CD4-positive, alpha-beta memory T cell (primary cell): ENCODE measurements at regions of chr20 and their contacts with region 1.

Region 1: DNA sequence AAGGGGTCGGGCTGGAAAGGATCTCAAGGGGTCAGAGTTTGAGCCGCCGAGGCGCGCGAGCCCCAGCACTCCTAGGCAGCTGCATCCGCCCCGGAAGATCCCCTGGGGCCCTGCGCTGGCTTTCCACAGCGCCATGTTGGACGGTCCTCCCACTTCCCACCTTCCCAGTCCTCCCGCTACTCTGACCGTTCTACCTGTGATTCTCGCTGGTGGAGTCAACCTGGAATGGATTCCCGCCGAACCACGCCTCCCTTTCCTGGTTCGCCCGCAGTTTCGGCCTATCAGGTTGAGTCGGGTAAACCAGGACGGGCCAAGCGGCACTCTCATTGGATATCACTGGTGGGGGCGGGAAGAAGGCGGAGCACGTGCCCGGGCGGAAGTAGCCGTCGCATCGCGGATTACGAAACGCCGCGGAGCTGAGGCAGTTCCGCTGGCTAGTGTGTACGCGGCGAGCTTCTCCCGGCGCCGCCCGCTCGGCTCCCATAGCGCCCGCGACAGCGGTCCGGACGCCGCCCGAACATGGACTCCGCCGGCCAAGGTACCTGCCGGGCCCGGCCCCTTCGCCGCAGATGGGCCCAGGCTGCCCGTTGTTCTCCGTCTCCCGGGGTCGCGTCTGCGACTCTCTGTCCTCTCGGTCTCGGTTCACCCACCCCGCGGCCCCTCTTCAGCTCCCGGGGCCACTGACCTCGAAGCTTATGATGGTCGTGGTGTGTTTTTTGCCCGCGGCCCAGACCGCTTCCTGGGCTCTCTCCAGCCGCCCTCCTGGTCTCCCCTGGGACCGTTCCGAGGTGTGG is at the start of gene TPD52L2:
- DNase-seq: peak; percentile 96 to 99 (median 97)
- H3K4me3 ChIP-seq: peak within 1 kb of the TSS; percentile 81 to 90
- H3K4me3 Mint-ChIP-seq: peak within 1 kb of the TSS; percentile 90 to 99 (median 96)
- H3K27ac ChIP-seq: peak within 1 kb of the TSS; percentile 81
- H3K27ac Mint-ChIP-seq: peak within 1 kb of the TSS; percentile 87 to 99 (median 96)
- H3K4me1 ChIP-seq: peaks cover 29% of the 10 kb centered on the region
- H3K4me1 Mint-ChIP-seq: peaks cover 15 to 48% (median 29%) of the 10 kb centered on the region in 4 donors
- H3K27me3 ChIP-seq: no peaks in the 10 kb centered on the region
- H3K27me3 Mint-ChIP-seq: no peaks in the 10 kb centered on the region
- total RNA-seq, gene TPD52L2: 44.4 to 44.9 TPM

Region 2: DNA sequence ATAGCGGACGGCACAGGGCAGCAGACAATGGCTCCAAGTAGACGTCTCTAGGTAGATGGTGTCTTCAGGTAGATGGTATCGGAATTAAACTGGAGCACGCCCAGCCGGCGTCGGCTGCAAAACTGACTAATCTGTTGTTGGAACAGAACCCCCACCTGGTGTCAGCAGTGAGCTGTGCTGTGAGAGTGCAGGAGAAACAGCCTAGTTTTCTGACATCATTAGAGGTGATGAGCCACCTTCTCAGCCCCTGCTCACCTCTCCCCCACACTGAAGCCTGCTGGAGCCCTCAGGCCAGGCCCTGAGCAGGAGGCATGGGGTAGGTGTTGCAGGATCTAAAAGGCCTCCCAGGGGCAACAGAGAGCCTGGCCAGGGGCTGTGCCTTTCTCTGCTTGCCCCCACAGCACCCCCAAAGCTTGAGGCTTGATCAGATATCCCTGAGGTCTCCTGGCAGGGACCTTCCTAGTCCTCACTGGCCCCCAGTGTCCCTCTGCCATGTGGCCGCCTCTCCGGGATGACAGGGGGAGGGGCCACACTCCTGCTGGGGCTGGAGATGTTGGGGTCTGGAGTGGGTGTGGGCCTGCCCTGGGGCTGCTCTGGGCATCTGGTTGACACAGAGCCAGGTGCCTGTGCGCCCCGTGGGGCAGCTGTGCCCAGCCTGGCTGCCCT is 284.1 kb before region 1 on chr20:
- CTCF ChIA-PET with region 1: interaction called, 4 read pairs
- POLR2A ChIA-PET with region 1: interaction called, 3 read pairs
- intact Hi-C with region 1: loop called (anchors 5 kb)
- DNase-seq: peak; percentile 68 to 82 (median 78)
- H3K4me3 ChIP-seq: no peak overlapping the region
- H3K4me3 Mint-ChIP-seq: peak overlapping the region in 1 of 8 donors; percentile 43
- H3K27ac ChIP-seq: no peak overlapping the region
- H3K27ac Mint-ChIP-seq: peak overlapping the region in 2 of 7 donors; percentile 7 to 16
- H3K4me1 ChIP-seq: peaks cover 3% of the 10 kb centered on the region
- H3K4me1 Mint-ChIP-seq: peaks cover 1 to 13% (median 6%) of the 10 kb centered on the region in 4 donors
- H3K27me3 ChIP-seq: no peaks in the 10 kb centered on the region
- H3K27me3 Mint-ChIP-seq: no peaks in the 10 kb centered on the region

Region 3: GRCh38 chr20:63707549-63708300 is 157.3 kb before region 1 on chr20 and contains the starts of genes ARFRP1 and ZGPAT:
- CTCF ChIA-PET with region 1: interaction called, 14 read pairs
- POLR2A ChIA-PET with region 1: interaction called, 26 read pairs
- intact Hi-C with region 1: loop called (anchors 1 kb)
- DNase-seq: peak; percentile 85 to 91 (median 86)
- H3K4me3 ChIP-seq: peak within 1 kb of the TSS; percentile 57 to 87
- H3K4me3 Mint-ChIP-seq: peak within 1 kb of the TSS; percentile 86 to 95 (median 90)
- H3K27ac ChIP-seq: peak within 1 kb of the TSS; percentile 65
- H3K27ac Mint-ChIP-seq: peak within 1 kb of the TSS; percentile 86 to 95 (median 90)
- H3K4me1 ChIP-seq: peaks cover 52% of the 10 kb centered on the region
- H3K4me1 Mint-ChIP-seq: peaks cover 24 to 61% (median 38%) of the 10 kb centered on the region in 4 donors
- H3K27me3 ChIP-seq: no peaks in the 10 kb centered on the region
- H3K27me3 Mint-ChIP-seq: no peaks in the 10 kb centered on the region
- total RNA-seq, gene ARFRP1: 85.6 to 92.0 TPM
- total RNA-seq, gene ZGPAT: 51.8 to 55.3 TPM

Region 4: GRCh38 chr20:63854069-63854765 is 10.8 kb before region 1 on chr20:
- CTCF ChIA-PET with region 1: no interaction called
- POLR2A ChIA-PET with region 1: interaction called, 16 read pairs
- intact Hi-C with region 1: no loop called
- DNase-seq: no peak
- H3K4me3 ChIP-seq: no peak overlapping the region
- H3K4me3 Mint-ChIP-seq: no peak overlapping the region
- H3K27ac ChIP-seq: no peak overlapping the region
- H3K27ac Mint-ChIP-seq: no peak overlapping the region
- H3K4me1 ChIP-seq: peaks cover 27% of the 10 kb centered on the region
- H3K4me1 Mint-ChIP-seq: peaks cover 10 to 28% (median 21%) of the 10 kb centered on the region in 4 donors
- H3K27me3 ChIP-seq: no peaks in the 10 kb centered on the region
- H3K27me3 Mint-ChIP-seq: peaks cover 12 to 13% of the 10 kb centered on the region in 2 donors

Region 5: DNA sequence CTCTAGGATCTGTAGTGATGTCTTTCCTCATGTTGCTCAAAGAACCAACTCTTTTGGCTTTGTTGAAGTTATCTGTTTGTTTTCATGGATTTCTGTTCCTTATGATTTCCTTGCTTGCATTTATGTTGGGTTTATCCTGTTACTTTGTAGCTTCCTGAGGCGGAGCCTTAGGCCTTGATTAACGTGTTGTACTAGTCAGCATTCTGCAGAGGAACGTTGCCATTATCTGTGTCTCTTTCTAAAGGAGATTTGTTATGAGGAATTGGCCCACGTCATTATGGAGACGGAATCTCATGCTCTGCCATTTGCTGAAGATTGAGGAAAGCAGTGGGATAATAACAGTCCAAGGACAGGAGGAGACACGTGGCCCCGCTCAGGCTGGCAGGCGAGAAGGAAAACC is 61.3 kb after region 1 on chr20:
- CTCF ChIA-PET with region 1: no interaction called
- POLR2A ChIA-PET with region 1: no interaction called
- intact Hi-C with region 1: no loop called
- DNase-seq: no peak
- H3K4me3 ChIP-seq: no peak overlapping the region
- H3K4me3 Mint-ChIP-seq: no peak overlapping the region
- H3K27ac ChIP-seq: no peak overlapping the region
- H3K27ac Mint-ChIP-seq: peak overlapping the region in 2 of 7 donors; percentile 37 to 62
- H3K4me1 ChIP-seq: peaks cover 10% of the 10 kb centered on the region
- H3K4me1 Mint-ChIP-seq: peaks cover 11 to 38% (median 13%) of the 10 kb centered on the region in 4 donors
- H3K27me3 ChIP-seq: no peaks in the 10 kb centered on the region
- H3K27me3 Mint-ChIP-seq: no peaks in the 10 kb centered on the region

Region 6: DNA sequence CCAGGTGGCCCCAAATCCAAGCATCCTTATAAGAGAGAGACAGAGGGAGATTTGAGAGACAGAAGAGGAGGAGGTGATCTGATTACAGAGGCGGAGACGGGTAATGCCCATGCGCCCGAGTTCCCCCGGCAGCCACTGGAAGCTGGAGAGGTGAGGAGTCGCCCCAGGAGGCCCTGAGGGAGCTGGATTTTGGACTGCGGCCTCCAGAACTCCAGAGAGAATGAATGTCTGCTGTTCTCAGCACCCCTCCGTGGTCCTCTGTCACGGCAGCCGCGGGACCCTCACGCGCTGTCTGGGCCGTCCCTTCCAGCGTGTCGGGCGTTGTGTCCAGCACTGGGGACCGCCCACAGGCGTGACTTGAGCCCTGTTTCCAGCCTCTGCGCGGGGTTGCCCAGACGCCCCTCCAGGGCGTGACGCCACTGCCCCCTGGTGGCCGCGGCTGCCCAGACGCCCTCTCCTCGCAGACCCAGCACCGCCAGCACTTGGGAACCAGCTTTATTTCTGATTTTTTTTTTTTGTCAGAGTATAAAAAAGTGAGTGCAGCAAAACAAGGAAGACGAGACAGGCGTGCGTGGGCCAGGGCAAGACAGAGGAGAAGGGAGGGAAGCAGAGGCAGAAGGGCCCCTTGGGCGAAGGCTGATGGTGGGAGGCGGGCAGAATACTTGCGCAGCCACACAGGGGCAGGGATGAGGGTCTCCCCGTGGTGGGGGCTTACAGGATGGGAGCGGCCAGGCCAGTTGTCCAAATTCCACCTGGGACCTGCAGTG is 108.8 kb after region 1 on chr20:
- CTCF ChIA-PET with region 1: interaction called, 12 read pairs
- POLR2A ChIA-PET with region 1: no interaction called
- intact Hi-C with region 1: loop called (anchors 5 kb)
- DNase-seq: peak; percentile 69 to 75 (median 71)
- H3K4me3 ChIP-seq: no peak overlapping the region
- H3K4me3 Mint-ChIP-seq: peak overlapping the region in 1 of 8 donors; percentile 43
- H3K27ac ChIP-seq: no peak overlapping the region
- H3K27ac Mint-ChIP-seq: peak overlapping the region in 6 of 7 donors; percentile 46 to 89 (median 71)
- H3K4me1 ChIP-seq: peaks cover 30% of the 10 kb centered on the region
- H3K4me1 Mint-ChIP-seq: peaks cover 22 to 55% (median 35%) of the 10 kb centered on the region in 4 donors
- H3K27me3 ChIP-seq: no peaks in the 10 kb centered on the region
- H3K27me3 Mint-ChIP-seq: no peaks in the 10 kb centered on the region